OCI-LY7 (cell line): ENCODE measurements at regions of chr11 and their contacts with region 1.

Region 1: GRCh38 chr11:48020092-48020755 is 39.9 kb downstream of the PTPRJ start:
- DNase-seq: peak; percentile 92
- H3K4me3 ChIP-seq: peak overlapping the region; percentile 66
- H3K27ac ChIP-seq: peak overlapping the region; percentile 92
- H3K4me1 ChIP-seq: peaks cover 99% of the 10 kb centered on the region
- CTCF ChIP-seq: peak; percentile 69

Region 2: DNA sequence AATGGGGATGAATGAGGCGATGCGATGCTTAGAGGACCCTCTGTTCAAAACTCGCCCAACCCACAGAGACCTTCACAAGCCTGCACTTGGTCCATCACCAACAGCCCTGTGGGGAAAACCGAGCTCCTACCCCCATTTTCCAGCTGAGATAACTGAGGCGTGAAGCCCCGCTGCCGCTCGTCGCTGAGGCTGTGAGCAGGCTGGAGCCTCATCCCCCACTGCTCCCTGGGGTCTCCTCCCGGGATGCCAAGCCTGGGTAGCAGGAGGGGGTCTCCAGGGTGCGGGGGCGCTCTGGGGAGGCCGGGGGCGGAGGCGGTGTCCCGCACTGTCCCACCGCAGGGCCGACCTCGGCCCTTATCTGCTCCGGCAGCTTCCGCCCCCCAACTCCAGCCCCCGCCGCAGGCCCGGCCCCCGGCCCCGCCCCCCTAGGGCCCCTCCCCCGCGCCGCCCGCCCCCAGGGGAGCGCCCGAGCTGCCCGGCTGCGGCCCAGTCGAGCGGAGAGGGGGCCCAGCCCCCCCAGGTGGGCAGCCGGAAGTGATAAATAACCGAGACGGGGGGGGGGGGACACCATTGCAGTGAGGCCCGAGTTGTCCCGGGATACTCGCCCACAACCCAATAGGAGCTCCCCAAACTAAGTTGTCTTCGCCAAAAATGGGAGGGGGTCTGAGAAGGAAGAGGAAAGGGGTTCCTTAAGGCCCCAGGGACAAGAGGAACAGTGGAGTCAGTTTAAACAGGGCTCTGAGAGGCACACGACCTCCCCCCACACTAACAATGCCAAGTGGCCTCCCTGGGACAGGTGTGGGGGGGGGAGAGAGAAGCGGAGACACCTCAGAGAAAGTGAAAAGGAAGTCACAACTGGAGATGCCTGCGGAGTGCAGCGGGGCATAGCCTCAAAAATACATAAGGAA is 620.1 kb before region 1 on chr11:
- CTCF ChIA-PET with region 1: no interaction called
- POLR2A ChIA-PET with region 1: no interaction called
- intact Hi-C with region 1: loop called (anchors 10 kb)
- DNase-seq: peak; percentile 92
- H3K4me3 ChIP-seq: peak overlapping the region; percentile 78
- H3K27ac ChIP-seq: peak overlapping the region; percentile 96
- H3K4me1 ChIP-seq: peaks cover 81% of the 10 kb centered on the region
- CTCF ChIP-seq: no peak

Region 3: GRCh38 chr11:47786373-47786772 is 233.9 kb before region 1 on chr11:
- CTCF ChIA-PET with region 1: no interaction called
- POLR2A ChIA-PET with region 1: no interaction called
- intact Hi-C with region 1: no loop called
- DNase-seq: no peak
- H3K4me3 ChIP-seq: no peak overlapping the region
- H3K27ac ChIP-seq: no peak overlapping the region
- H3K4me1 ChIP-seq: no peaks in the 10 kb centered on the region
- CTCF ChIP-seq: no peak

Region 4: DNA sequence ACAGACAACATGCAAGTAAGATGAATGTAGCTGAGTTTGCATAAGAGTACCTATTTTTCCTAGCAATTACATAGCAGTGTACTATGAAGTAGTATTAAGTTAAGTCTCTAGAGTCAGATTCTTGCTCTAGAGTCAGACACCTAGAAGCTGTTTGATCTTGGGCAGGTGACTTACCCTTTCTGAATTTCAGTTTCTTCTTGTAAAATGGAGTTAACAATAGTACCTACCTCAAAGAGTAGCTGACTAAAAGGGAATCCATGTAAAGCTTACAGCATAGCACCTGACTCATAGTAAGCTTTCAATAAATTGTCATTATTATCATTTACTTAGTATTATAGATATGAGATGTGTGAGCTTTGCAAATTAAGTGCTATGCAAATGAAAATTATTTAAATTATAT is 87.7 kb before region 1 on chr11:
- CTCF ChIA-PET with region 1: interaction called, 3 read pairs
- POLR2A ChIA-PET with region 1: interaction called, 6 read pairs
- intact Hi-C with region 1: loop called (anchors 2 kb)
- DNase-seq: no peak
- H3K4me3 ChIP-seq: no peak overlapping the region
- H3K27ac ChIP-seq: no peak overlapping the region
- H3K4me1 ChIP-seq: peaks cover 47% of the 10 kb centered on the region
- CTCF ChIP-seq: no peak

Region 5: DNA sequence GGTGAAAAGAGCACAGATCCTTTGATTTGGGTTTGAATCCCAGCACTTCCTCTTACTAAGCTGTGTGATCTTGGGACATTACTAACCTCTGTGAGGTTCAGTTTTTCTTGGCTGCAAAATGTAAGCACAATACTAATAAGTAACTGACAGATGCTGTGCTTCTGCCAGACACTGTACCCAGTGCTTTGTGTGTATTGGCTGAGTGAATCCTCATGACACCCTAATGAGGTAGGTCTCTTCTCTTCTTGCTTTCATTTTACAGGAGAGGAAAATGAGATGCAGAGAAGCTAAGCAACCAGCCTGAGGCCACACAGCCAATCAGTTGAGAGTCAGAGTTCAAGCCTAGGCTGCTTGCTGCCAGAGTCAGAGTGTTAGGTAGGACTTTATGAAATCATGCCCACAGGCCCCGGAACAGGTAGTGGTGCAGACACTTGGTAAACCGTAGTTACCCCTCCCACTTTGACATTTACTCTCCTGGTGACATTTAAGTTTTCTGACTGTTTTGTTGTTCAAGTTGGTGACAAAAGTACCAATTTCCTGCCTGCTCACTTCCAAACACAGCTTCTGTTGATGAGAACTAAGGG is 18.7 kb before region 1 on chr11:
- CTCF ChIA-PET with region 1: interaction called, 9 read pairs
- POLR2A ChIA-PET with region 1: interaction called, 91 read pairs
- intact Hi-C with region 1: loop called (anchors 1 kb)
- DNase-seq: peak; percentile 75
- H3K4me3 ChIP-seq: peak overlapping the region; percentile 45
- H3K27ac ChIP-seq: peak overlapping the region; percentile 85
- H3K4me1 ChIP-seq: peaks cover 91% of the 10 kb centered on the region
- CTCF ChIP-seq: no peak

Region 6: DNA sequence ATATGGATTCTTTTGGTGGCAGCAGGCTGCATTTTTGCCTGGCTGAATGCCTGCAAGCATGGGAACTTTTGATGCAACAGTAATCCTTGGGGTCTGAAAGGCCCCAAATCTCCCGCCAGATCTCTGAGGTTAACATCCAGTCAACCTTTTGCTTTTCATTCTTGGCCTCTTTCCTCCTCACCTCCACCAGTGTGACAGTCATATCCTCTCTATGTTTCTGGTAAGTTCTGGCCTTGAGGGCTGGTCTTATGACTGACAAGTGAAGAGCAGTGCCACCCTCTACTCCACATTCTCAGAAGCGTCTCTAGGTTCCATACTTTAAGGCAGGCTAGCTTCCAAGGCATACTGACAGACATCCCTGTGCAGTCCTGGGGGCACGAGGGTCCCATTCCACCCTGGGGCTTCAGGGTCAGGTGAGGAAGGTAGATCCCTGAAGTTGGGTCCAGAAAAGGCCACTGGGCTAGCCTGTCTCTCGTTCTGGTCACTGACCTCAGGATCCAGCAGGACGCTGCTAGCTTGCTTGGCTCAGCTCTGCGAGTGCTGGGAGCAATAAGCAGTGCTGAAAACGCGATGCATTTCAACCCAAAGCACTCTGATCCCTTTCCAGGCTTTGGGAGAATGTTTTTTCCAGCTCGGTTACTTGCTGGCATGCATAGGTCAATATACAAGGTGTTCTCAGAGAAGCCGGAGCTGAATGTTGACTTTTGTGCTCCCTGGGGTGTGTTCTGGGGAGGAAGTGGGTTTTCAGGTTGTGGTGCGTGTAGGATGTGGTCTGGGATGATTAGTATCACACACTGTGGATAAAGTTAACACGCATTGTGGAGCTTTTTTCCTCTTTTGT is 35.3 kb after region 1 on chr11:
- CTCF ChIA-PET with region 1: interaction called, 3 read pairs
- POLR2A ChIA-PET with region 1: interaction called, 18 read pairs
- intact Hi-C with region 1: no loop called
- DNase-seq: peak; percentile 71
- H3K4me3 ChIP-seq: peak overlapping the region; percentile 7
- H3K27ac ChIP-seq: no peak overlapping the region
- H3K4me1 ChIP-seq: peaks cover 63% of the 10 kb centered on the region
- CTCF ChIP-seq: no peak

Region 7: DNA sequence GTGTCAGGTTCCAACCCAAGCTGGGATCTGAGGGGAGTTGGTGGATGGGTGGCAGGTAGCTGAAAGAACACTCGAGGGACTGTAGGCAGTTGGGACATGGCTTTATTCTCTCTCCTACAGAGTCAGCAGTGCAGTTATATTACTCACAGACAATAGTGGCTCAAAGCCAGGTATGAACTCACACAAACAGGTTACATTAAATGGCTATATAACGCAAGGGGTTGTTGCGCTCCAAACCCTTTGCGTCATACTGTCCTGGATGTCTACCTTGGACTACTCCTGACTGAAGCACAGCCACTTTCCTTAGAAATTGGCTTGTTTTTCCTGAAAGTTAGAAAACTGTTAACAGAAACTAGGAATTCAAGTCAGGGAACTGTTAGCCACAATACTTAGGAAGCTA is 130.0 kb after region 1 on chr11:
- CTCF ChIA-PET with region 1: no interaction called
- POLR2A ChIA-PET with region 1: no interaction called
- intact Hi-C with region 1: no loop called
- DNase-seq: no peak
- H3K4me3 ChIP-seq: no peak overlapping the region
- H3K27ac ChIP-seq: no peak overlapping the region
- H3K4me1 ChIP-seq: no peaks in the 10 kb centered on the region
- CTCF ChIP-seq: no peak

Region 8: DNA sequence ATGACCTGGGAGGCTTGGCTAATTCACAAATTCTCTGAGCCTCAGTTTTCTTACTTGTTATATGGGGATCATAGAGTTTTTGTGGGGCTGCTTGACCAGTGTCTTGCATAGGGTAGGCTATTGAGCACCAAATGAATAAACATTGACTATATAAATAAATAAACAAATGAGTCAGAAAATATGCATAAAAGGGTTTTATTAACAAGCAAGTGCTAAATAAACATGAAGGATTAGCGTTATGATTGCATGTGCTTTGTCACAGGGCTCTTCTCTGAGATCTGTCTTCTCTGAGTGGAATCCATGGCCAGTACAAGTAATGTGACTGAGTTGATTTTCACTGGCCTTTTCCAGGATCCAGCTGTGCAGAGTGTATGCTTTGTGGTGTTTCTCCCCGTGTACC is 196.3 kb after region 1 on chr11 and contains the start of gene OR4B1:
- CTCF ChIA-PET with region 1: no interaction called
- POLR2A ChIA-PET with region 1: no interaction called
- intact Hi-C with region 1: no loop called
- DNase-seq: no peak
- H3K4me3 ChIP-seq: no peak within 1 kb of the TSS
- H3K27ac ChIP-seq: no peak within 1 kb of the TSS
- H3K4me1 ChIP-seq: no peaks in the 10 kb centered on the region
- CTCF ChIP-seq: no peak
- total RNA-seq, gene OR4B1: not detected in 2 replicates